PC-3 (cell line): ENCODE measurements at regions of chr12 and their contacts with region 1.

Region 1: GRCh38 chr12:106357549-106358395 is at the start of gene POLR3B:
- DNase-seq: peak; percentile 97
- ATAC-seq: peak; percentile 85
- H3K4me3 ChIP-seq: peak within 1 kb of the TSS; percentile 82
- H3K27ac ChIP-seq: peak within 1 kb of the TSS; percentile 70
- H3K4me1 ChIP-seq: peaks cover 18% of the 10 kb centered on the region
- H3K27me3 ChIP-seq: no peaks in the 10 kb centered on the region
- CTCF ChIP-seq: peak; percentile 93
- total RNA-seq, gene POLR3B: 23.4 and 24.3 TPM in 2 replicates

Region 2: GRCh38 chr12:106296193-106296877 is 61.4 kb before region 1 on chr12:
- CTCF ChIA-PET with region 1: interaction called, 12 read pairs
- POLR2A ChIA-PET with region 1: interaction called, 3 read pairs
- intact Hi-C with region 1: no loop called
- DNase-seq: peak; percentile 98
- ATAC-seq: peak; percentile 95
- H3K4me3 ChIP-seq: no peak overlapping the region
- H3K27ac ChIP-seq: peak overlapping the region; percentile 82
- H3K4me1 ChIP-seq: peaks cover 26% of the 10 kb centered on the region
- H3K27me3 ChIP-seq: no peaks in the 10 kb centered on the region
- CTCF ChIP-seq: no peak